Vagina (tissue), 2 donors: ENCODE measurements at regions of chr20 and their contacts with region 1.

Region 1: DNA sequence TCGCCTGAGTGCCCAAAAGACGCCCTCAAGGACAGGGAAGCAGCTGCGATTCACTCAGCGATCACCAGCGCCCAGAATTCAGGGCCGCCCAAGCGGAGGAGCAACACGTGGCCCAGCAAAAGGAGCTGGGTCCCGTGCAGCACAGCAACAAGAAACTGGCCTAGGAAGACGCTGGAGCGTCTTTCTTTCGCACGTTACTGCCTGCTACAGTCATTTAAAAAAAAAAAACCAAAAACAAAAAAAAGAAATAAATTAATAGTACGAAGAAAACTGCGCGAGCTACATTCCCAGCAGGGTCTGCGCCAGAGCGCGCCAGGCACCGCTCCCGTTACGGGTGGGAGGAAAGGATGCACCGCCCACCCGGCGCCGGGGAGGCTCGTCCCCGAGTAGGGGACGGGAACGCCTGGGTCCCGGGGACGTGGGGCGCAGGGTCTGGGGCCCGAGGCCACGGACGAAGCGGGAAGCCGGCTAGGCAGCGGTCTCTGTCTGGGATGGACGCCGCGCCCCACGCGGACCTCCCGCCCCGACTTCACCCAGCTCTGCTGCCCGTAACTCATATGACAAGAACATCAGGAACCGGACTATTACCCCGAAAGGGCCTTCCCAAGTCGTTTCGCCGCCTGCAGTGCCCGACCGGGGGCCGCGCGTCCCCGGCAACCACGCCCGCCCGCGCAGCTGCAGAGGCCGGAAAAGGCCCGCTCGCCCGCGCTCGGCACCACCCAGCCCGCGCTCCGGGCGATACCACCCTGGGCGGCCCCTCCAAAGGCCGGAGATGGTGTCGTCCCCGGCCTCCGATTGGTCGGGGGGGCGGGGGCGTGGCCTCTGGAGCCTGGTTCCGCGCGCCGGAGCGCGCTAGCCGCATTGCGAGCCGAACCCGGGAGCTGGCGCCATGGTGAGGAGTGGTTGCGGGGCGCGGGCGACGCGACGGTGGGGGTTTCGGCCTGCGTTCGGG is at the start of gene NOP56:
- DNase-seq: peak in 1 of 2 donors; percentile 93
- H3K4me3 ChIP-seq: peak within 1 kb of the TSS; percentile 54 to 91
- H3K27ac ChIP-seq: peak within 1 kb of the TSS; percentile 89
- H3K4me1 ChIP-seq: peaks cover 28% of the 10 kb centered on the region
- H3K27me3 ChIP-seq: no peaks in the 10 kb centered on the region
- CTCF ChIP-seq: no peak
- POLR2A ChIP-seq: no peak
- total RNA-seq, gene NOP56: 87.7 TPM

Region 2: GRCh38 chr20:2538931-2539720 is 112.9 kb before region 1 on chr20:
- intact Hi-C with region 1: loop called (anchors 10 kb)
- DNase-seq: no peak
- H3K4me3 ChIP-seq: no peak overlapping the region
- H3K27ac ChIP-seq: no peak overlapping the region
- H3K4me1 ChIP-seq: no peaks in the 10 kb centered on the region
- H3K27me3 ChIP-seq: no peaks in the 10 kb centered on the region
- CTCF ChIP-seq: no peak
- POLR2A ChIP-seq: no peak

Region 3: DNA sequence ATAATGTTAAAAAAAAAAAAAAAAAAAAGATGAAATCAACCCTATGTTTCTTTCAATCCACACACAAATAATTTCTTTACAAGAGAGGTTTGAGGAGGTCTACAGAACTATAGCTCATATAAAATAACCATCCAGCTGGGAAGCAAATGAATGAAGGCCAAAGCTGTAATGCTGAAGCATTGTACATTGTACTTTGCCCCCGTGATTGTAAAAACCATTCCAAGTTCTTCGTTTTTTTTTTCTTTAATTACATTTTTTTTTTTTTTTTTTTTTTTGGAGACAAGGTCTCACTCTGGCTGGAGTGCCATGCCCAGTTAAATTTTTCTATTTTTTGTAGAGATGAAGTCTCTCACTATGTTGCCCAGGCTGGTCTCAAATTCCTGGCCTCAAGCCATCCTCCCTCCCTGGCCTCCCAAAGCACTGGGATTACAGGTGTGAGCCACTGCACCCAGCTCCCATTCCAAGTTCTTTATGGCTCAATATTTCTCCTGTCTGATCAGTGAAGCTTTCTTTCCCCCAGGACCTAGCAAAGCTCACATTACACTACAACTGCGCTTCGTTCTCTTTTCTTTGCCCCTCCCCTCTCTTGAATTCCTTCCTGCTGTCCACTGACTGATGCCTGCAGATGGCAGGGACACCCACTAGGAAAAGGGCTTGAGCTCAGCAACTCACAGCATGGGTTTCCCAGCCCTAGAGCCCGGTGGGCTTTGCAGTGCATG is 52.6 kb before region 1 on chr20:
- intact Hi-C with region 1: no loop called
- DNase-seq: peak in 1 of 2 donors; percentile 42
- H3K4me3 ChIP-seq: no peak overlapping the region
- H3K27ac ChIP-seq: no peak overlapping the region
- H3K4me1 ChIP-seq: no peaks in the 10 kb centered on the region
- H3K27me3 ChIP-seq: no peaks in the 10 kb centered on the region
- CTCF ChIP-seq: no peak
- POLR2A ChIP-seq: no peak